ENCODE measurements at regions of chr10 and their contacts with region 1.

Region 1: DNA sequence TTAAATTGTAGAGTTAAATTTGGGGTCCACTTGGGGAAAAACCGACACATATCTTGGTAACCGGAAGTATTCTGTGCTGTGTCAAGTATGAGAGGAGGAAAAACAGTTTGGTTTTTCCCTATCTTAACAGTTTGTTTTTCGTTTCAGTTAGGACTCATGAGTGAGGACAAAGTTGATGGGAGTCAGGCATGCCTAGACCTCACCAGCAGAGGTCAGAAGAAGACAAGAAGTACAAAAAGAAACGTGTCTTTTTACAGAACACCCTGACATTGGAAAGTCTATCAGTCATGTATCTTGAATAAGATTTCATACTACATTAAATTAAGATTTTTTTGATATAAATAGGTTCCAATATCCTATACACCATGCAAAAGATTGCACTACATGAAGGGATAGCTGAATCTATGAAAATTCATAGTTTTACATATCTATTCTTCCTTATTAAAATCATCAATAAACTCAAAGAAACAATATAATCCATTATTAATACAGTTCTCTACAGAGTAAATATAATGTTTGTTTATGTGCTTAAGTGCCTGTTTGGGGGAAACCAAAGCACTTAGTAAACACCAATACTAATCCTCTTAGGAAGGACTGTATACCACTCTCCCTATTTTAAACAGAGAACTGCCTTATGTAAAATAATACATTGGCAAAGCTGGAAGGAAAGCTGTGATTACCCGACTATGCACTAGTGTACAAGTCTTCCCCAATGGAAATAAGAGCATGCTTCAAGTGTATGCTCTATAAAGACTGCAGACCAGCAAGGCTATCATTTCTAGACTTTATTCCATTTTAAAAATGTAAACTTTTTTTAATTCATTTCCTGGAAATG is 95.6 kb downstream of the USP6NL start:
- DNase-seq: peak; percentile 63
- H3K4me3 Mint-ChIP-seq: no peak overlapping the region
- H3K27ac Mint-ChIP-seq: no peak overlapping the region
- H3K4me1 Mint-ChIP-seq: peaks cover 18% of the 10 kb centered on the region
- H3K27me3 Mint-ChIP-seq: peaks cover 1% of the 10 kb centered on the region

Region 2: GRCh38 chr10:11488126-11488525 is 27.7 kb before region 1 on chr10:
- CTCF ChIA-PET with region 1: no interaction called
- POLR2A ChIA-PET with region 1: no interaction called
- intact Hi-C with region 1: no loop called
- DNase-seq: no peak
- H3K4me3 Mint-ChIP-seq: no peak overlapping the region
- H3K27ac Mint-ChIP-seq: no peak overlapping the region
- H3K4me1 Mint-ChIP-seq: no peaks in the 10 kb centered on the region
- H3K27me3 Mint-ChIP-seq: no peaks in the 10 kb centered on the region

Region 3: GRCh38 chr10:11551916-11552602 is 36.2 kb after region 1 on chr10:
- CTCF ChIA-PET with region 1: interaction called, 3 read pairs
- POLR2A ChIA-PET with region 1: no interaction called
- intact Hi-C with region 1: loop called (anchors 2 kb)
- DNase-seq: no peak
- H3K4me3 Mint-ChIP-seq: no peak overlapping the region
- H3K27ac Mint-ChIP-seq: peak overlapping the region; percentile 58
- H3K4me1 Mint-ChIP-seq: peaks cover 33% of the 10 kb centered on the region
- H3K27me3 Mint-ChIP-seq: peaks cover 1% of the 10 kb centered on the region

Region 4: DNA sequence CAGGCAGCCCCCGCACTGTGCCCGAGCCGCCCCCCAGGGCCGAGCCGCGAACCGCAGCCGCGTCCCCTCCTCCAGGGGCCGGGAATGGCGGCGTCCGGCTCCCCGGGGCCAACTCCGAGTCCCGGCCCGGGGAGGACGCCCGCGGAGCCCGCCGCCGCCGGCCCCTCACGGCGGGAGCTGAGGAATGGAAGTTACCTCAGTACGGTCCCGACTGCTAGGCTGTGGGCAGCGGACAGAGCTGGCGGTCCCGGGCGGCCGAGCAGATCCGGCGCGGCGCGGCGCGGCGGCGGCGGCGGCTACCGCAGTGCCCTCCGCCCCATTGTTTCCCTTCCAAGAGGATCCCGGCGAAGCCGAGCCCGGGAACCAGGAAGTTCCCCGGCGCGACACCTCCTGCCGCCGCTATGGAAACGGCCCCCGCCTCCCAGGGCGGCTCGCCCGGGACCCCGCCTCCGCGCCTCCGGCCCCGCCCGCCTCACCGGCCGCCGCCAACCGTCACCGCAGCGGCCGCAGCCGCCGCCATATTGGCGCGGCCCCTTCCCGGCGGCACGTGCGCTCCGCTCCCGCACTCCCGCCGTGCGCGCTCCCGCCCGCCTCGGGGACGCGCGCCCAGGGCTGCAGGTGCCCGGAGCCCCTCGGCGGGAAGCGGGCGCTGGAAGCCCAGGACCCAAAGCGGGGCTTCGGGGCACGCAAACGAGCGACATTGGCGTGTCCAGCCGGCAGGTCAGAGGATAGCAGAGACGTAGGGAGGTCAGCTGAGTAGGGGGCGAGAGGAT is 95.6 kb after region 1 on chr10 and contains the start of gene USP6NL:
- CTCF ChIA-PET with region 1: interaction called, 5 read pairs
- POLR2A ChIA-PET with region 1: no interaction called
- intact Hi-C with region 1: loop called (anchors 5 kb)
- DNase-seq: peak; percentile 72
- H3K4me3 Mint-ChIP-seq: peak within 1 kb of the TSS; percentile 83
- H3K27ac Mint-ChIP-seq: peak within 1 kb of the TSS; percentile 70
- H3K4me1 Mint-ChIP-seq: peaks cover 38% of the 10 kb centered on the region
- H3K27me3 Mint-ChIP-seq: peaks cover 2% of the 10 kb centered on the region
- total RNA-seq, gene USP6NL: 3.2 to 3.4 TPM

Region 5: DNA sequence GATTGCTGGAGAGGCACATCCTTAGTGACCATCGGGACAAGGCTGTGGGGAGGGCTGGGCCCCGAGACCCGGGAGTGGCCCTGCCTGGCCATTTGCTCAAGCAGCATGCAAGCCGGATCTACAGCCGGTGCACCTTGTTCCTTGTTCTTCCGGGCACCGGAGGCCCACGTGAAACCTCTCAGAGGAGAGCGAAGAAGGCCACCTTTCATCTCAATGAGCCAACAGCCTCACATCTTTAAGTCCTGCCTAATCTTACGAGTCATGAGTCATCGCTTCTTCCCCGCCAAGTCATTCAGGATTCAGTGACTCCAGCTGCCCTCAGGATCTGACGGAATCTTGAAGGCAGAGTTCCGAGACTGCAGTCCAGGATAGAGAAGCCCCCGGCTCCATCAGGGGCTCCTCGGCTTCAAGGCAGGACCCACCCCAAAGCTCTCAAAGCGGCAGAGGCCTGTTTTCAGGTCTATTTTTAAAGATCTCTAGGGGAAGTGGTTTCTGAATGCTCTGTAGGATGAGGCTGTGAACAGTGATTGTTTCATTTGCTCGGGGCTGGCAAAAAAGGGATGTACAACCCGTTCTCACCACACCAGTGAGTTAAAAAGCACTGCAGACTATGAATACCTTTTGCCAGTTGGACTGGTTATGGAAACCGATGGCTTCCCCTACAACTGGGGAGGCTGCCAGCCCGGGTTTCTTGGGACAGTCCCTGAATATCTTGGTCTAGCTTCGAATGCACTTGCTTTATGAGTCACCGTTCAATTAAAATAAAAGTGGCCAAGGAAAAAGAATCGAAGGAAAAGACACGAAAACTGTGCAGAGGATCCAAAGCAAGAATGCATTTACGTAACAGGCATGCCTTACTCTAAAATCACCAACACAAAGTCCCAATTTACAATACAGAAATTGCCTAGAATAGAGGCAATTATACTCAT is 169.2 kb after region 1 on chr10:
- CTCF ChIA-PET with region 1: no interaction called
- POLR2A ChIA-PET with region 1: interaction called, 3 read pairs
- intact Hi-C with region 1: loop called (anchors 1 kb)
- DNase-seq: peak; percentile 80
- H3K4me3 Mint-ChIP-seq: peak overlapping the region; percentile 67
- H3K27ac Mint-ChIP-seq: peak overlapping the region; percentile 82
- H3K4me1 Mint-ChIP-seq: peaks cover 27% of the 10 kb centered on the region
- H3K27me3 Mint-ChIP-seq: no peaks in the 10 kb centered on the region

Region 6: DNA sequence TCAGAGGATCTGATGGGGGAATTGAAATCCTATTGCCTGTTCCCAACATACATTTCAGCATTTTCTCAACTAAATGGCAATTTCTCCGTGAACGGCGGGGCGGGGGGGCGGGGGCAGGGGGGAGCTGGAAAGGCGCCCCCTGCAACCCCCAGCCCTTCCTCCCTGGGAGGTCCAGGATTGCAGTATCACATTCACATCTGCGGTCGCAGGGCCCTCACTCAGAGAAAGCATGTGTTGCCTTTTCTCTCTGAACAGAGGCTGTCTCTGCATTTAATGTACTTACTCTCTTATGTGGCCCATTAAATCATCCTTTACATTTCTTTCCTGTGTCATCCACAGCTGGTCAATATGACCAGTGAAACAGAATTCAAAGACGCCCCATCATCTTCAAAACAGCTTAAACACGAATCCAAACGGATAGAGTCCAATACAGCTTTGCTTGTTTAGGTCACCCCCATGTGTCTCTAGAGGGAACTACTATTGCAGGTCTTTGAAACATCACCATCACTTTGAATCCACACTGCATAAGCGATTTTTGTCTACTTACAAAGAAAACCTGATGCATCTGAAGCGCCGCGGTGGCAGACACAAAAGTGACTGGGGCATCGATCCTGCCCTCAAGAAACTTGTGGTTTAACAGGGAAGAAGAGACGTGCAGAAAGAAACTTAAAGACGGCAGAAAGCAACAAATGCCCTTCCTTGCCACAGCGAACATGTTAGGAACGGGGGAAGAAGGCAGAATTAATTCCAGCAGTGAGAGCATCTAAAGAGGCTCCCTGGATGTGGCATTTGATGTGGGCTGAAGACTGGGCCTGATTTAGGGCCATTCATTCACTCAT is 209.3 kb after region 1 on chr10:
- CTCF ChIA-PET with region 1: interaction called, 27 read pairs
- POLR2A ChIA-PET with region 1: no interaction called
- intact Hi-C with region 1: loop called (anchors 1 kb)
- DNase-seq: no peak
- H3K4me3 Mint-ChIP-seq: no peak overlapping the region
- H3K27ac Mint-ChIP-seq: no peak overlapping the region
- H3K4me1 Mint-ChIP-seq: peaks cover 2% of the 10 kb centered on the region
- H3K27me3 Mint-ChIP-seq: peaks cover 10% of the 10 kb centered on the region

Region 7: DNA sequence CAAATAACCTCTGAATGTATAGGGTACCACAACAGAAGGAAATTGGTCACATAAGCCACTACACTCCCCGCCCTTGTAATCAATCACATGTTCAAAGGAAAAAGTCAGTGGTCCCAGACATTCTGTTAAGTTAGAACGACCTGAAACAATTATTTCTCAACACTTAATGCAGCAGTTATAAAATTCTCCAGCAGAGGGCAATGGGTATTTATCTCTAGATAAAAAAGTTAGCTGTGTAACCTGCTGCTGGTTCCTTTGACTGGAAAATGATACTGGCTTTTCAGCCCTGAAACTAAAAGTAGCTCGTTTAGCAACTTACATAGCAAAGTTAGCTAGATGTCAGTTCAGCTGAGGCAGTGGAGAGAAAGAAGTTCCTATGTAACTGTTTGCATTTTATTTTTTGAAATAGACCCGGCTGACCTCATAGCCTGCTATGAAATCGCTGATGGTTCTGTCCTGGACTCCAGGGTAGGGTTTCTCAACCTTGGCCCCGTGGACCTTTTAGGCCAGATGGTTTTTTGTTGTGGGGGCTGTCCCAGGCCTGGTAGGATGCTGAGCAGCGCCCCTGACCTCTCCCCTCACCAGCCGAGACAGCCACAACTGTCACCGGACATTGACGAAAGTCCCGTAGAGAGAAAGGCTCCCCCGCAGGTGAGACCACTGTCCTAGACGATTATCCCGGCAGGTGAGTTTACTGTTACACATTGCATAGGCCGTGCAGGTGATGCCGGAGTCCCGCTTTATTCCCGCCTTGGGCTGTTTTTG is 267.2 kb after region 1 on chr10:
- CTCF ChIA-PET with region 1: interaction called, 10 read pairs
- POLR2A ChIA-PET with region 1: no interaction called
- intact Hi-C with region 1: no loop called
- DNase-seq: no peak
- H3K4me3 Mint-ChIP-seq: no peak overlapping the region
- H3K27ac Mint-ChIP-seq: no peak overlapping the region
- H3K4me1 Mint-ChIP-seq: no peaks in the 10 kb centered on the region
- H3K27me3 Mint-ChIP-seq: peaks cover 7% of the 10 kb centered on the region

Measured in activated CD4-positive, alpha-beta memory T cell treated with anti-CD3 and anti-CD28 coated beads for 36 hours (primary cell).